ENCODE measurements at regions of chr16 and their contacts with region 1.

Region 1: DNA sequence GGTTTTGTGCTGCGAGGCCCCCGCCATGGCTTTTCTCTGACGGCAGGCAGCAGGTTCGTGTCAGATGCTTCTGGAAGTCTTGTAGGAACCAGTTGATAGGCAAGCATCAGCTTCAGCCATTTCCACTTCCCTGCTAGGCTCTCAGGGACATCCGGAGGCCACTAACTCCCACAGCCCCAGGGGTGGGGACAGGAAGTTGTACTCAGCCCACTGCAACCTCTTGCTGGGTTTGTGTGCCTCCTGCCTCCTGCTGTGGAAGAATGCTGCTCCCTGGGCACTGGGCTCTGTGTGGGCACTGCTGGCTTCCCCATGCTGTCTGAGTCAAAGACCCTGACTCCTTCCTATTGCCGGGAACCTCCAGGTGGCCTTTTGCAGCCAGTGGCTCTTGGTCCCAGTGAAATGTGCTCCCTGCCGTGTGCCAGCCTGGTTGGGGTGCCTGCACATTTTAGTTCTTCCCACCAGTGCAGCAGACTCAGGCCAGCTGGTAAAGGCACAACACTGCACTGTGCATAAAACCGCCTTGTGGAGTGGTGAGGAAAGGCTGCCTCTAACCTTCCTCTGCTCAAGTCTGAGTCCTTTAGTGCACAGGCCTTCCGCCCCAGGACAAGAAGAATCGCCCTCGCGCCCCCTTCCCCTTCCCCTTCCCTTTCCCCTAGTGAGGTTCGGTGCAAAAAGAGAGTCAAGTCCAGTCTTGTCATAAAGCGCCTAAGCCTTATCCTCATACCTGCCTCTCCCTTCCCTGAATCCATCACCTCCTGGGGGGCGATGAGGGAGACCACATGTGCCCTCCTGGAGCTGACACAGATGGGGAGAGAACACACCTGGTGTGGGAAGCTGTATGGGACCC is 16.6 kb downstream of the LDHD start:
- DNase-seq: peak; percentile 66
- H3K4me3 Mint-ChIP-seq: no peak overlapping the region
- H3K27ac Mint-ChIP-seq: peak overlapping the region; percentile 82
- H3K4me1 Mint-ChIP-seq: peaks cover 47% of the 10 kb centered on the region
- H3K27me3 Mint-ChIP-seq: peaks cover 4% of the 10 kb centered on the region

Region 2: DNA sequence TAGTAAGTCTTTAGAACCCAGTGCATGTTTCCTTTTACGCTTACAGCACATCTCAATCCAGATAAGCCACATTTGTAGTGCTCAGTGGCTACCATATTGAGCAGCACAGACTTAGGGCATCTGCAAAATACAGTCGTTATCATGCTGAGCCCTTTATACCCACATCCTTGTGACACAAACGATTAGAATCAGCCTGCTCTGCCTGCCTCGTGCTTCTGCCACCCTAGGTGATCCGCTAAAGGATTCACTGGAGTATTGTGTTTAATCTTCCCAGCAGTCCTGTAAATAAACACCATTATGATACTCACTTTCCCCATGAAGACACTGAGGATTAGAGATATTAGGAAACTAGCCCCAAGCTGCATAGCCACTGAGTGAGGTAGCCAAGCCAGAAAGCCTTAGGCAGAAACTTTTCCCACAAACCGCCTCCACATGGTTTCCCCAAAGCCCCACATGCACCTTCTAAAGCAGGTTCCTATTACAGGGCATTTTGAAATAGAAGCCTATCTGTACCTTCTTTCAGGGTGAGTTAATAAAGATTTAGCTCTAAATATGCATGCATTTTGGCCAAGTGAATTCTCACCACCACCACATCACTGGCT is 273.9 kb before region 1 on chr16:
- CTCF ChIA-PET with region 1: no interaction called
- DNase-seq: no peak
- H3K4me3 Mint-ChIP-seq: no peak overlapping the region
- H3K27ac Mint-ChIP-seq: no peak overlapping the region
- H3K4me1 Mint-ChIP-seq: no peaks in the 10 kb centered on the region
- H3K27me3 Mint-ChIP-seq: peaks cover 9% of the 10 kb centered on the region

Region 3: GRCh38 chr16:75087375-75087979 is 12.5 kb before region 1 on chr16:
- CTCF ChIA-PET with region 1: interaction called, 10 read pairs
- DNase-seq: no peak
- H3K4me3 Mint-ChIP-seq: no peak overlapping the region
- H3K27ac Mint-ChIP-seq: no peak overlapping the region
- H3K4me1 Mint-ChIP-seq: peaks cover 3% of the 10 kb centered on the region
- H3K27me3 Mint-ChIP-seq: no peaks in the 10 kb centered on the region